Left ventricle myocardium superior (tissue), 1 donor: ENCODE measurements at regions of chr9 and their contacts with region 1.

Region 1: GRCh38 chr9:15572200-15572770 is 19.4 kb downstream of the CCDC171 start:
- DNase-seq: no peak
- ATAC-seq: no peak

Region 2: GRCh38 chr9:15592317-15592716 is 20.0 kb after region 1 on chr9:
- intact Hi-C with region 1: loop called (anchors 2 kb)
- DNase-seq: no peak
- ATAC-seq: no peak